ENCODE measurements at regions of chr6 and their contacts with region 1.

Region 1: GRCh38 chr6:33029328-33030184 is 20.2 kb upstream of the HLA-DOA start:
- DNase-seq: peak; percentile 56
- ATAC-seq: peak; percentile 77
- H3K4me3 Mint-ChIP-seq: peak overlapping the region; percentile 77
- H3K27ac Mint-ChIP-seq: peak overlapping the region; percentile 100
- H3K4me1 Mint-ChIP-seq: peaks cover 81% of the 10 kb centered on the region
- H3K27me3 Mint-ChIP-seq: no peaks in the 10 kb centered on the region
- CTCF ChIP-seq: no peak

Region 2: DNA sequence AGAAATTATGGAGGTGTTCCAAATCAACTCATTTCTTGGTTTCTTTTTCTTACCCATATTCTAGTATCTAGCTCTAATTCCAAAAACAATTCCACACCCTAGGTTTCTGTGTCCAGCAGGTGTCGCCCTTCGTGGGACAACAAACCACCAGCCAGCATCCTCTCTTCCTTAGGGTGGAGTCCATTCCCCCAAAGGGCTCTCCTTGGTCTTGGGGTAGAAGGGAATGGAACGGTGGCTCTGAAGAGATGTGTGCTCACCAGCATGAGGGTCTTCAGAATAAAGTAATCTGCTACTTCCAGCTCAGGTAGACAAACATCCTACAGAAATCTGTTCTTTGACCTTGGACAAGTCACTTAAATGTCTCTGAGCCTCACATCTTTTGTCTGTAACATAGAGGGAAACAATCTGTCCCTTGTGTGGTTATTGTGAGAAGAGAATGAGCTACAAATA is 95.9 kb before region 1 on chr6:
- CTCF ChIA-PET with region 1: no interaction called
- POLR2A ChIA-PET with region 1: no interaction called
- intact Hi-C with region 1: no loop called
- DNase-seq: peak; percentile 60
- ATAC-seq: peak; percentile 54
- H3K4me3 Mint-ChIP-seq: no peak overlapping the region
- H3K27ac Mint-ChIP-seq: peak overlapping the region; percentile 79
- H3K4me1 Mint-ChIP-seq: peaks cover 92% of the 10 kb centered on the region
- H3K27me3 Mint-ChIP-seq: no peaks in the 10 kb centered on the region
- CTCF ChIP-seq: peak; percentile 65

Region 3: GRCh38 chr6:33008944-33009861 is 20.4 kb before region 1 on chr6 and contains the start of gene HLA-DOA:
- CTCF ChIA-PET with region 1: interaction called, 19 read pairs
- POLR2A ChIA-PET with region 1: interaction called, 334 read pairs
- intact Hi-C with region 1: loop called (anchors 2 kb)
- DNase-seq: peak; percentile 61
- ATAC-seq: peak; percentile 95
- H3K4me3 Mint-ChIP-seq: peak within 1 kb of the TSS; percentile 98
- H3K27ac Mint-ChIP-seq: peak within 1 kb of the TSS; percentile 95
- H3K4me1 Mint-ChIP-seq: peaks cover 57% of the 10 kb centered on the region
- H3K27me3 Mint-ChIP-seq: no peaks in the 10 kb centered on the region
- CTCF ChIP-seq: no peak
- total RNA-seq, gene HLA-DOA: 153 and 167 TPM in 2 replicates

Region 4: GRCh38 chr6:33040157-33040556 is 10.6 kb after region 1 on chr6:
- CTCF ChIA-PET with region 1: interaction called, 3 read pairs
- POLR2A ChIA-PET with region 1: interaction called, 43 read pairs
- intact Hi-C with region 1: no loop called
- DNase-seq: no peak
- ATAC-seq: no peak
- H3K4me3 Mint-ChIP-seq: no peak overlapping the region
- H3K27ac Mint-ChIP-seq: peak overlapping the region; percentile 53
- H3K4me1 Mint-ChIP-seq: peaks cover 10% of the 10 kb centered on the region
- H3K27me3 Mint-ChIP-seq: no peaks in the 10 kb centered on the region
- CTCF ChIP-seq: no peak

Region 5: DNA sequence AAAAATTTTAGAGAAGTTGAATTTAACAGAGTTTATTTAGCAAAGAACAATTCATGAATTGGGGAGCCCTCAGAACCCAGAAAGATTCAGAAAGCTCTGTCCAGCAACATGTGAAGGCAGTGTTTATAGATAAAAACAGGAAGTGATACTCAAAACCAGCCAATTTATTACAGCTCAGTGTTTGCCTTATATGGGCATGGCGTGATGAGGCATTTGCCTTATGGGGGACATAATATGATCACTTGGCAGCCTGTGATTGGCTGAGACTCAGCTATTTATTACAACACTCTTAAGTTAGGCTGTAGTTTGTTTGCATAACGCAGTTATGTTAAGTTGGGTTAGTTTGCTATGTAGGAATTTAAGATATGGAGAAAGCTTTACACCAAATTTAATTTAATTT is 32.4 kb after region 1 on chr6:
- CTCF ChIA-PET with region 1: no interaction called
- POLR2A ChIA-PET with region 1: interaction called, 2,264 read pairs
- intact Hi-C with region 1: loop called (anchors 1 kb)
- DNase-seq: no peak
- ATAC-seq: peak; percentile 72
- H3K4me3 Mint-ChIP-seq: peak overlapping the region; percentile 64
- H3K27ac Mint-ChIP-seq: peak overlapping the region; percentile 94
- H3K4me1 Mint-ChIP-seq: peaks cover 52% of the 10 kb centered on the region
- H3K27me3 Mint-ChIP-seq: no peaks in the 10 kb centered on the region
- CTCF ChIP-seq: no peak

Measured in activated B cell treated with CpG ODN at 0.5 μM for 24 hours (primary cell).